Mucosa of descending colon (tissue), 3 donors: ENCODE measurements at regions of chr11 and their contacts with region 1.

Region 1: DNA sequence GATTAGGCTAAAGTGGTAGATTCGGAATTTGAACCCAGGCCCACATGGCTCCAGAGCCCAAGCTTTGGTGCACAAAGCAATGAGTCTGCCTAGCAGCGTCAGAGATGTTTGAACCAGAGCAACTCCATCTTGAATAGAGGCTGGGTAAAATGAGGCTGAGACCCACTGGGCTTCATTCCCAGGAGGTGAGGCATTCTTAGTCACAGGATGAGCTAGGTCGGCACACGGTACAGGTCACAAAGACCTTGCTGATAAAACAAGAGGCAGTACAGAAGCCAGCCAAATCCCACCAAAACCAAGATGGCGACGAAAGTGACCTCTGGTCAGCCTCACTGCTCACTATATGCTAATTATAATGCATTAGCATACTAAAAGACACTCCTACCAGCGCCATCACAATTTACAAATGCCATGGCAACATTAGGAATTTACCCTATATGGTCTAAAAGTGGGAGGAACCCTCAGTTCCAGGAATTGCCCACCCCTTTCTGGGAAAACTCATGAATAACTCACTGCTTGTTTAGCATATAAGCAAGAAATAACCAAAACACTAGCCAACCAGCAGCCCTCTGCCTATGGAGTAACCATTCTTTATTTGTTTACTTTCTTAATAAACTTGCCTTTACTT is 40.3 kb upstream of the DAGLA start:
- DNase-seq: no peak
- ATAC-seq: no peak
- H3K4me3 ChIP-seq: no peak overlapping the region
- H3K4me1 ChIP-seq: peaks cover 14% of the 10 kb centered on the region
- CTCF ChIP-seq: no peak

Region 2: GRCh38 chr11:61477727-61478148 is 162.2 kb before region 1 on chr11:
- intact Hi-C with region 1: loop called in 1 of 2 experiments (anchors 10 kb)
- DNase-seq: peak; percentile 59 to 70 (median 66)
- ATAC-seq: peak; percentile 39
- H3K4me3 ChIP-seq: no peak overlapping the region
- H3K4me1 ChIP-seq: no peaks in the 10 kb centered on the region
- CTCF ChIP-seq: peak; percentile 82

Region 3: DNA sequence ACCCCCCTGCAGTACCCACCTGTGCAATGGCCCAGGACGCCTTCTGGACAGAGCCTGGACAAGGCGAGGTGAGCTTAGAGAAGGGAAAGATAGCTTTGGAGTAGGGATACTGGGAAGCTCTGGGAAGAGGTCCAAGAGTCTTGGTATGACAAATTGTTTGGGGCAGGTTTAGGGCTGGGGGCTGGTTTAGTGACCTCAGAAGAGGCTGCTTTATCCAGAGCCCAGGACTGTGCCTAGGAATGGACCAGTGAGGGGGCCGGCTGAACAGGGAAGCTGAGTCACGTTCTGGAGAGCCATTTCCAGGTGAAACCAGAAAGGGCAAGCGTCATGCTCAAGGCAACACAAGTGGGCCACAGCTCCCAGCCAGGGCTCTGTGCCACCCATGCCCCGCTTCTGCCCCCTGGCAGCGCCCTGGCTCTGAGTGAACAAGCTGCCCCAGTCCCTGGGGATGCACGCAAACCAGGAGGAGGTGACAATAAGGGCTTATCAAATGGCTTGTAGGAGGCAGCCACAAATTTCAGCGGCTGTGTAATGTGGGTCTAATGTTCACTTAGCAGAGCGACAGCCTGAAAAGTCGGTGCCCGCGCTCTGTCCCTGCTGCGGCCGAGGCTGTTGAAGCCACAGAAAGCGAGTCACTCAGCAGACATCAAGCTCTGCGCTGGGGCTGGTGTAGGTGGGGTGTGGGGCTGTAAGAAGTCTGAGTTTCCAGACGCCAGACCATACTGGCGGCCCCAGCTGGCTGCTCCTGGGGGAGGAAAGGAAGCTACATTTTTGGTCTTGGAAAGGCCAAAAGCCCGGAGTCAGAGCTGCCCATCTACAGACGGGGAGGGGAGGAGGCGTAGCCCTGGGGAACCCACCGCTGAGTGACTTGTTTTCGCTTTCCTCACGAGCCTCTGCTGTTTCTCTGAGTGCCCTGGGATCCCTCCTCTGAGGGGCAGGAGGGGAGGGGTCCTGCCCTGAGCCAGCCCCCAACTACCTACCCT is 40.8 kb before region 1 on chr11:
- intact Hi-C with region 1: loop called in 1 of 2 experiments (anchors 5 kb)
- DNase-seq: no peak
- ATAC-seq: no peak
- H3K4me3 ChIP-seq: no peak overlapping the region
- H3K4me1 ChIP-seq: peaks cover 7% of the 10 kb centered on the region
- CTCF ChIP-seq: no peak

Region 4: GRCh38 chr11:61688365-61689163 is 48.6 kb after region 1 on chr11:
- intact Hi-C with region 1: no loop called
- DNase-seq: peak; percentile 83 to 86 (median 84)
- ATAC-seq: peak; percentile 88
- H3K4me3 ChIP-seq: no peak overlapping the region
- H3K4me1 ChIP-seq: peaks cover 37% of the 10 kb centered on the region
- CTCF ChIP-seq: no peak

Region 5: DNA sequence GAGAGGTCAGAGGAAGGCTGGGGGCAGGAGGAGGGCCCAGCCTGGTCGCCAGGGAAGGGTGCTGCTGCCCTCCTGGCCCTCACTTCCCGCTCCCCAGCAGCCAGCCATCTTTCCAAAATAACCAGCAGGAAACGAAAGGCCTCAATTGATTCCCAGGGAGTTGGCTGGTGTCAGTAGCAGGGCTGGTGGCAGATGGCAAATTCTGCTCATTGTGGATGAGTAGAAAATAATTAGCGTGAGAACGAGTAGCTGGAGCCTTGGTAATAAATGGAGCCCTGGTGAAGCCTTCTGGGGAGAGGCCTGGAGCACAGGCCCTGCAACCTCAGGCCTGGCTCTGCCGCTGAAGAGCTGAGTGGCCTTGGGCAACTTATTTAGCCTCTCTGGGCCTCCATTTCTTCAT is 71.6 kb after region 1 on chr11:
- intact Hi-C with region 1: no loop called
- DNase-seq: no peak
- ATAC-seq: no peak
- H3K4me3 ChIP-seq: no peak overlapping the region
- H3K4me1 ChIP-seq: peaks cover 14% of the 10 kb centered on the region
- CTCF ChIP-seq: no peak